Right ventricle myocardium inferior (tissue), 1 donor: ENCODE measurements at regions of chr3 and their contacts with region 1.

Region 1: DNA sequence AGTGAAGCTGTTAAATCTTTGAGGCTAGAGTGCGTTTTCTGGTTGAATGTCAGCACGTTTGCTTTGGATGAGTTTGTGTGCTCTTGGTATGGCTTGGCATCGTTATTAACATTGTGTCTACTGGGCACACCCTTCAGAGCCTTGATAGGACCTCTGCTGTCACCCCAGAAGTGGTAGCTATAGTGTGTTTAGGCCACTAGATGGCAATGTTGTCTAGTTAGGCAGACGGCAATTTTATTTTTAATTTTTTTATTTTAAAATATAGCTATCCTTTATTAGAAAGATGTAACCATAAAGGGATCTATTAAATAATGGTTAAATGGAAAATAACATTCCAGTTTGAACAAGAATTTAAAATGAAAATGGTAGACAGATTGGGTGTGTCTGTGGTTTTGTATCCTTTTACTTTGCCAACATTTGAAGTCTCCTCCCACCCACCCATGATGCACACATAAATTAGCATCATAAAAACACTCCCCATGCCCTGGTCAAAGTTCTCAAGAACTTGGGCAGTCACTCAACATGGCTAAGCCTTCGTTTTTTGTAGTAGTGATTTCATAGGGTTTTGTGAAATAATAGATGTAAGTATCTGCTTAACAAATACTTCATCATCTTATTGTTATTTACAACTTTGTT is 200.7 kb downstream of the KCNH8 start:
- DNase-seq: no peak
- ATAC-seq: peak; percentile 54

Region 2: DNA sequence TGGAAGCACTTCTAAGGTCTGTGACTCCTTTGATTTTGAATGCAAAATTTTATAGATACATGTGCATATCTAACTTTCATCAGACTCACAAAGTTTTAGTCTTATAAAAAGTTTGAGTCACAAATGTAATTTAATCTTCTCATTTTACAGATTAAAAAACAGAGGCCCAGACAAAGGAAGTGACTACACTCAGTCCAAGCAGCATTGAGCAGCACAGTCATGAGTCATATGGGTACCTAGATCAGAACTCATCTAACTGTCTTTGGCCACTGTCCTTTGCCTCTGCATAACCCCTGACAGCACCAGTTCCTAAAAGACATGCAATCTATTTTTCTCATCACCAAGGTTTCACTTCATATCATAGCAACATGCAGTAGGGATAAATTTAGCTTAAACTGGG is 411.5 kb before region 1 on chr3:
- intact Hi-C with region 1: no loop called
- DNase-seq: no peak
- ATAC-seq: no peak

Region 3: GRCh38 chr3:19543212-19543841 is 194.3 kb after region 1 on chr3:
- intact Hi-C with region 1: loop called (anchors 2 kb)
- DNase-seq: no peak
- ATAC-seq: no peak

Region 4: DNA sequence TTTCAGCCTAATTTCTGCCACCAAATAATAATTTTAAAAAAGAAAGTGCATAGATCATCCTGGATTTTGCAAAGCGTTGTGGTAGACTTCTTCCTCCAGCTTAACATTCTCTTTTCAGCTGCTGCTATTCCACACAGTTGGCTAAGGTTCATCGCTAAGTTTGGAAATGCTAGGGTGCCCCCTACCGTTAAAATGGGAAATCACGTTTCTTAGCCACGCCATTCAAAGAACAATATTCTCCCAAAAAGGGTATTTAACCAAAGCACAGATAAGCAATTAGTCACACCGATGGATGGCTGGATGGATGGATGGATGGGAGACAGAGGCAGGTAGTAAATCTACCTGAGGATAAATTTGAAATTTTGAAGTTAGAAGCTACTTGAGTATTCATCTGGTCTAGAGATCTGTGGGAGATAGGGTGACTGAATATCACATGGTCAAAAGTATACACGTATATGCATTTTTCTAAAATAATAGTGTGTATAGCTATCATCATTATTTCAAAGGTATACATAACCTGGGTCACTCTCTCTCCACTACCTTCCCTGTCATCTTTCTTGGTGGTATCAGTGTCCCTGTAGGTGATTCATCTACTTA is 517.8 kb after region 1 on chr3:
- intact Hi-C with region 1: loop called (anchors 5 kb)
- DNase-seq: no peak
- ATAC-seq: no peak